ENCODE measurements at regions of chr5 and their contacts with region 1.

Region 1: GRCh38 chr5:78631931-78632330 is 16.6 kb downstream of the LHFPL2 start:
- DNase-seq: no peak
- H3K4me3 ChIP-seq: no peak overlapping the region
- H3K27ac ChIP-seq: no peak overlapping the region
- H3K4me1 ChIP-seq: peaks cover 14% of the 10 kb centered on the region
- CTCF ChIP-seq: no peak

Region 2: GRCh38 chr5:78661691-78662090 is 29.8 kb after region 1 on chr5:
- CTCF ChIA-PET with region 1: no interaction called
- POLR2A ChIA-PET with region 1: no interaction called
- intact Hi-C with region 1: loop called (anchors 1 kb)
- DNase-seq: peak; percentile 39
- H3K4me3 ChIP-seq: no peak overlapping the region
- H3K27ac ChIP-seq: peak overlapping the region; percentile 16
- H3K4me1 ChIP-seq: peaks cover 38% of the 10 kb centered on the region
- CTCF ChIP-seq: no peak

Measured in OCI-LY7 (cell line).